Activated CD8-positive, alpha-beta T cell treated with anti-CD3 and anti-CD28 coated beads, Interleukin-2, amount 10 ng/mL, durations not matched to agents 7 days and 5 days (primary cell): ENCODE measurements at regions of chr4 and their contacts with region 1.

Region 1: DNA sequence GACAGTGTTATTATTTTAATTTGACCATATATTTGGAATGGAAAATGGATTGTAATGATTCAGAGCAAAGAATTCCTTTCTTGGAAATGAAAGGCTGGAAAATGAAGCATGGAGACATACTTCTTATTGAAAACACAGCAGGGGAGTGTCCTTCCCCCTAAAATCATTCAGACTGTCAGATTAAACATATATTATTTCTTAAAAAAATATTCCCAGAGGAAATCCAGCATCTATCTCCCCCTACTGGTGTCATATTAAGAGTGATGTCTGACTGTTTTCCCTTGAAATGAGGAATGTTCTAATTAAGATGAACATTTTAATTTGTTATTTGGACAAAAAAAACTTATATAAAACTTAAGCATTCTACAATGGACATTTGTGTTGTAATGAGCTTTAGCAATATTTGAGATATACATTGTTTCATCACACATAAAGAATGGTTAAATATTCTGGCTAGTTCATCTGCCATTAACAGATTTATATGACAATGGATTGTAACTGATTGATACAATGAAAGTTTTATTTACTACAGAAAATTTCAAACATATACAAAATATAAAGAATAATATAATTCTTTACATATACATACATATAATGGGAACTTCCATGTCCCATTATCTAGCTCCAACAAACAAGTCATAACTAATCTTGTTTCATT is 264.6 kb downstream of the SPRY1 start:
- DNase-seq: no peak
- ATAC-seq: no peak
- H3K4me3 Mint-ChIP-seq: no peak overlapping the region
- H3K27ac Mint-ChIP-seq: no peak overlapping the region
- H3K4me1 Mint-ChIP-seq: peaks cover 24% of the 10 kb centered on the region
- H3K27me3 Mint-ChIP-seq: peaks cover 13% of the 10 kb centered on the region

Region 2: DNA sequence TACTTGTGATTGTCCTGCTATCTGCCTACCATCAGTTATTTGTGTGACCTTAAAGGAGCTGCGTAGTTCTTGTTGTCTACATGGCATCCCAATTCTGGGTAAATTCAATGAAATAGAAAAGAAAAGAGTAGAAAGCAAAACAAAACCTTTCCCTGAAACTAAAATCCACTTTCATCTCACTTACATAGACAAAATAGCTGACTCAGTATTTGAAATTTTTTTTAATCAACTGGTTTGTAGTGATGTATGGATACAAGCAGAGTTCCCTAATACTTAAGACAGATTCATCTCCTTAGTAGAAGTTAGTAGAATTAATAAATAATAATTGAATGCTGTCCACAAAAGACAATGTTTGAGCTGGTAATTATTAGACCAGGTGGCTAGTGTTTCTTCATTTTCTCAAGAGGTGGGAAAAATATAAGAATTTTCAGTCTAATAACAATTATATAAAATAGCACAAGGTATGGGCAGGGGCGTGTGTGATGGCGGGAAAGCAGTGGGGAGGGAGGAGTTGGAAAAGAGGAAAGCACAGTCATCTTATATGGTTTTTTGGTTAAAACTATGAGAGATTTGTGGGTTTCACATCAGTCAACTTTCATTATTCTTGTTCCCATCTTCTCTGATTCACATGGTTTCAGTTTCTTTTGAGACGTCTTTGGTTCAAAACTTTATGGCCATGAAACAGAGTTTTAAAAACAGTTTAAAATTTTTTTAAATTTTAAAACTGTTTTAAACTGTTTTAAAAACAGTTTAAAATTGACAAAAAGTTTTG is 10.6 kb after region 1 on chr4:
- CTCF ChIA-PET with region 1: interaction called, 11 read pairs
- POLR2A ChIA-PET with region 1: no interaction called
- DNase-seq: peak; percentile 42
- ATAC-seq: peak; percentile 88
- H3K4me3 Mint-ChIP-seq: no peak overlapping the region
- H3K27ac Mint-ChIP-seq: peak overlapping the region; percentile 55
- H3K4me1 Mint-ChIP-seq: peaks cover 28% of the 10 kb centered on the region
- H3K27me3 Mint-ChIP-seq: peaks cover 22% of the 10 kb centered on the region

Region 3: DNA sequence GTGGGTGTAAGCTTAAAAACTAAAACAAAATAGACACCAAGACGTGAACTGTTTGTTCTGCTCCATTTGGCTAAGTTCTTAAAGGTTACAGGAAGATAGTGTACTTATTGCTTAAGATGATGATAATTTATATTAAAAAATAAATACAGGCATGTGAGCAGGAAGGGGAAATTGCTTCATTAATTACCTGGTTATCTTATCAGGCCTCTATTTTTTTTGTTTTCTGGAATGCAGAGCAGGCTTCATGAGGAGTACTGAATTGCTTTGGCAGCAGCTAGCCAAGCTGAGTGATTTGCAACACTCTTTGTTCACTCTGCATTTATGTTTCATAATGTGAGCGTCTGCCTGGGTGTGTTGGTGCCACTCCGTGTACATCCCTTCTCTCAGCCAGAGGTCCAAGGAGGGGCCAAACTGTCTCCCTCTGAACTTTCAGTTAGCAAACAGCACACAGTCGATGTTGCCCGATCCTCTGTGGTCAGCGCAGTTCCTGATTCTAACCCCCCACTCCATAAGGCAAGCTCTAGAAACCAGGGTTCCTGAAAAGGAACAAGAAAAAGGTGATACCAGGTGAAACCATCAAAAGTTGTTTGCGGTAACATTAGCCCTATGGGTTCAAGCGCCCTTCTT is 83.6 kb after region 1 on chr4:
- CTCF ChIA-PET with region 1: no interaction called
- POLR2A ChIA-PET with region 1: no interaction called
- DNase-seq: no peak
- ATAC-seq: no peak
- H3K4me3 Mint-ChIP-seq: peak overlapping the region; percentile 32
- H3K27ac Mint-ChIP-seq: no peak overlapping the region
- H3K4me1 Mint-ChIP-seq: peaks cover 4% of the 10 kb centered on the region
- H3K27me3 Mint-ChIP-seq: peaks cover 8% of the 10 kb centered on the region